Transverse colon (tissue), 4 donors: ENCODE measurements at regions of chr6 and their contacts with region 1.

Region 1: GRCh38 chr6:83417880-83418663 is 12.8 kb downstream of the ME1 start:
- DNase-seq: no peak
- H3K4me3 ChIP-seq: no peak overlapping the region
- H3K27ac ChIP-seq: no peak overlapping the region
- H3K4me1 ChIP-seq: no peaks in the 10 kb centered on the region
- H3K27me3 ChIP-seq: no peaks in the 10 kb centered on the region
- CTCF ChIP-seq: peak; percentile 58 to 83 (median 70)
- EP300 ChIP-seq: no peak
- POLR2A ChIP-seq: no peak

Region 2: GRCh38 chr6:83221889-83222479 is 196.1 kb before region 1 on chr6:
- in situ Hi-C with region 1: loop called in 2 of 4 experiments (anchors 10 kb)
- intact Hi-C with region 1: no loop called
- DNase-seq: no peak
- H3K4me3 ChIP-seq: no peak overlapping the region
- H3K27ac ChIP-seq: no peak overlapping the region
- H3K4me1 ChIP-seq: no peaks in the 10 kb centered on the region
- H3K27me3 ChIP-seq: no peaks in the 10 kb centered on the region
- CTCF ChIP-seq: peak; percentile 23 to 50 (median 42)
- EP300 ChIP-seq: no peak
- POLR2A ChIP-seq: no peak

Region 3: GRCh38 chr6:83378621-83379388 is 39.3 kb before region 1 on chr6:
- in situ Hi-C with region 1: no loop called
- intact Hi-C with region 1: no loop called
- DNase-seq: no peak
- H3K4me3 ChIP-seq: no peak overlapping the region
- H3K27ac ChIP-seq: no peak overlapping the region
- H3K4me1 ChIP-seq: peaks cover 0 to 6% (median 0%) of the 10 kb centered on the region in 4 donors
- H3K27me3 ChIP-seq: no peaks in the 10 kb centered on the region
- CTCF ChIP-seq: no peak
- EP300 ChIP-seq: no peak
- POLR2A ChIP-seq: no peak

Region 4: GRCh38 chr6:83505356-83505755 is 87.3 kb after region 1 on chr6:
- in situ Hi-C with region 1: loop called in 3 of 4 experiments (anchors 5 to 10 kb)
- intact Hi-C with region 1: no loop called
- DNase-seq: no peak
- H3K4me3 ChIP-seq: no peak overlapping the region
- H3K27ac ChIP-seq: no peak overlapping the region
- H3K4me1 ChIP-seq: no peaks in the 10 kb centered on the region
- H3K27me3 ChIP-seq: no peaks in the 10 kb centered on the region
- CTCF ChIP-seq: no peak
- EP300 ChIP-seq: no peak
- POLR2A ChIP-seq: no peak